CD4-positive, alpha-beta memory T cell (primary cell): ENCODE measurements at regions of chr1 and their contacts with region 1.

Region 1: GRCh38 chr1:59947047-59947938 is 20.7 kb upstream of the CYP2J2 start:
- DNase-seq: peak; percentile 26 to 43 (median 40)
- H3K4me3 ChIP-seq: no peak overlapping the region
- H3K4me3 Mint-ChIP-seq: no peak overlapping the region
- H3K27ac ChIP-seq: no peak overlapping the region
- H3K27ac Mint-ChIP-seq: no peak overlapping the region
- H3K4me1 ChIP-seq: no peaks in the 10 kb centered on the region
- H3K4me1 Mint-ChIP-seq: no peaks in the 10 kb centered on the region
- H3K27me3 ChIP-seq: peaks cover 4% of the 10 kb centered on the region
- H3K27me3 Mint-ChIP-seq: peaks cover 8 to 9% of the 10 kb centered on the region in 2 donors

Region 2: GRCh38 chr1:59779949-59780348 is 167.3 kb before region 1 on chr1:
- CTCF ChIA-PET with region 1: interaction called, 8 read pairs
- POLR2A ChIA-PET with region 1: no interaction called
- intact Hi-C with region 1: loop called (anchors 1 kb)
- DNase-seq: no peak
- H3K4me3 ChIP-seq: no peak overlapping the region
- H3K4me3 Mint-ChIP-seq: no peak overlapping the region
- H3K27ac ChIP-seq: no peak overlapping the region
- H3K27ac Mint-ChIP-seq: no peak overlapping the region
- H3K4me1 ChIP-seq: no peaks in the 10 kb centered on the region
- H3K4me1 Mint-ChIP-seq: no peaks in the 10 kb centered on the region
- H3K27me3 ChIP-seq: no peaks in the 10 kb centered on the region
- H3K27me3 Mint-ChIP-seq: peaks cover 0 to 5% of the 10 kb centered on the region in 2 donors

Region 3: GRCh38 chr1:59879574-59879973 is 67.7 kb before region 1 on chr1:
- CTCF ChIA-PET with region 1: interaction called, 28 read pairs
- POLR2A ChIA-PET with region 1: no interaction called
- intact Hi-C with region 1: loop called (anchors 1 kb)
- DNase-seq: peak in 4 of 5 donors; percentile 8 to 27 (median 13)
- H3K4me3 ChIP-seq: no peak overlapping the region
- H3K4me3 Mint-ChIP-seq: no peak overlapping the region
- H3K27ac ChIP-seq: no peak overlapping the region
- H3K27ac Mint-ChIP-seq: no peak overlapping the region
- H3K4me1 ChIP-seq: no peaks in the 10 kb centered on the region
- H3K4me1 Mint-ChIP-seq: no peaks in the 10 kb centered on the region
- H3K27me3 ChIP-seq: no peaks in the 10 kb centered on the region
- H3K27me3 Mint-ChIP-seq: no peaks in the 10 kb centered on the region

Region 4: DNA sequence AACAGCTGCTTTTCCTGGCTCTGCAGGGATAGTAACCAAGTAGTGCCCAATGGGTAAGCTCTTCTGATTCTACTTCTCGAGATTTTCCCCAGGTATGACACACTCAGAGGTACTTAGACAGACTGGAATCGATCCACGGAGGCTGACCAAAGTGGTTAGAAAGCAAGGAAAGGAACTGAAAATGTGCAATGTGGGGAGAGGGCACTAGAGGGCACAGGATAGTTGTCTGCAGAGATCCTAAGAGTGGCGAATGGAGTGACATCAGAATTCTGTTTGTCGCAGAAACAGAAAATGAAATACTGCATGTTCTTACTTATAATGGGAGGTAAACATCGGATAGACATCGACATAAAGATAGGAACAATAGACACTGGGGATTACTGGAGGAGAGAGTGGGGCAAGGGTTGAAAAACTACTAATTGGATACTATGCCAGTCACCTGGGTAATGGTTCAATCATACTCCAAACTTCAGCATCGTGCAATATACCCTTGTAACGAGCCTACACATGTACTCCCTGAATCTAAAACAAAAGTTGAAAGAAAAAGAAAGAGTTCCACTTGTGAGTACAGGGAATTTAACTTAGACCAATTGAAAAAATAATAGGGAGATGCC is 44.0 kb before region 1 on chr1:
- CTCF ChIA-PET with region 1: interaction called, 10 read pairs
- POLR2A ChIA-PET with region 1: no interaction called
- intact Hi-C with region 1: loop called (anchors 1 kb)
- DNase-seq: no peak
- H3K4me3 ChIP-seq: no peak overlapping the region
- H3K4me3 Mint-ChIP-seq: no peak overlapping the region
- H3K27ac ChIP-seq: no peak overlapping the region
- H3K27ac Mint-ChIP-seq: no peak overlapping the region
- H3K4me1 ChIP-seq: no peaks in the 10 kb centered on the region
- H3K4me1 Mint-ChIP-seq: peaks cover 0 to 3% (median 1%) of the 10 kb centered on the region in 4 donors
- H3K27me3 ChIP-seq: no peaks in the 10 kb centered on the region
- H3K27me3 Mint-ChIP-seq: peaks cover 6% of the 10 kb centered on the region in 2 donors

Region 5: DNA sequence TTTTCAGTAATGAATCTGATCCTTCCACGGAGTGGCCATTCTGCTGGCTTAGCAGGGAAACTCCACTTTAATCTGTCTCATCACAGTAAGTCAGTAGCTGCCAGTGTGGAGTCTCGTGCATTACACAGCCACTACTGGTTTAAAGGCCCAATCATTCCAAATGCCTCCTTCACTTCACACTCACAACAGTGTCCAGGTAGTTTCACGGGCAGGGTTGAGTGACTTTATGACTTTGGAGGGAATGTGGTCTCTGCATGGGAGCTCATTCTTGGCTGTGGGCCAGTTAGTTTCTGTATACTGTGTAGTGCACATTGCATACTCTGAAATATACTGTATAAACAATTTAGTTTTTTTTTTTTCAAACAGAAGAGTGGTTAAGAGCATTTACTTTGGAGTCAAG is 160.9 kb after region 1 on chr1:
- CTCF ChIA-PET with region 1: no interaction called
- POLR2A ChIA-PET with region 1: no interaction called
- intact Hi-C with region 1: no loop called
- DNase-seq: no peak
- H3K4me3 ChIP-seq: no peak overlapping the region
- H3K4me3 Mint-ChIP-seq: no peak overlapping the region
- H3K27ac ChIP-seq: no peak overlapping the region
- H3K27ac Mint-ChIP-seq: no peak overlapping the region
- H3K4me1 ChIP-seq: no peaks in the 10 kb centered on the region
- H3K4me1 Mint-ChIP-seq: no peaks in the 10 kb centered on the region
- H3K27me3 ChIP-seq: no peaks in the 10 kb centered on the region
- H3K27me3 Mint-ChIP-seq: no peaks in the 10 kb centered on the region